Activated CD4-positive, alpha-beta memory T cell treated with anti-CD3 and anti-CD28 coated beads for 36 hours (primary cell): ENCODE measurements at regions of chr3 and their contacts with region 1.

Region 1: DNA sequence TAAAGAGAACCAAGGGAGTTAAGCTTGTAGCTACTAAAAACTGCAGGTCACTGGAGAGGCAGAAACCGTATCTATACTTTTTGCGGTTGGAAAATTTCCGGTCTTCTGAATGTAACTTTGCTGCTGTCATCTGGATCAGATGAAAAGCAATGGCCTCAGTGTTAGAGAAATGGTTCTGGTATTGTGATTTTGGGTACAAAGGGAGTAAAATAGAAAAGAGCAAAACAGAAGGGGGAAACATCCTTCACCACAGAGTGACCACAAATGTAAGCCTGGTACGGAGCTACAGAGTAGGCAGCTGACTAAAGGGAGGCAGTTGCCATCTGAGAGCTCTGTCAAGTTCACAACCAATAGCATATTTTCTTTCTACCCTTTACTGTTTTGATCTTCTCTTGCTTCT is 5.6 kb downstream of the CD96 start:
- DNase-seq: peak; percentile 71
- H3K4me3 Mint-ChIP-seq: no peak overlapping the region
- H3K27ac Mint-ChIP-seq: no peak overlapping the region
- H3K4me1 Mint-ChIP-seq: peaks cover 43% of the 10 kb centered on the region
- H3K27me3 Mint-ChIP-seq: no peaks in the 10 kb centered on the region

Region 2: DNA sequence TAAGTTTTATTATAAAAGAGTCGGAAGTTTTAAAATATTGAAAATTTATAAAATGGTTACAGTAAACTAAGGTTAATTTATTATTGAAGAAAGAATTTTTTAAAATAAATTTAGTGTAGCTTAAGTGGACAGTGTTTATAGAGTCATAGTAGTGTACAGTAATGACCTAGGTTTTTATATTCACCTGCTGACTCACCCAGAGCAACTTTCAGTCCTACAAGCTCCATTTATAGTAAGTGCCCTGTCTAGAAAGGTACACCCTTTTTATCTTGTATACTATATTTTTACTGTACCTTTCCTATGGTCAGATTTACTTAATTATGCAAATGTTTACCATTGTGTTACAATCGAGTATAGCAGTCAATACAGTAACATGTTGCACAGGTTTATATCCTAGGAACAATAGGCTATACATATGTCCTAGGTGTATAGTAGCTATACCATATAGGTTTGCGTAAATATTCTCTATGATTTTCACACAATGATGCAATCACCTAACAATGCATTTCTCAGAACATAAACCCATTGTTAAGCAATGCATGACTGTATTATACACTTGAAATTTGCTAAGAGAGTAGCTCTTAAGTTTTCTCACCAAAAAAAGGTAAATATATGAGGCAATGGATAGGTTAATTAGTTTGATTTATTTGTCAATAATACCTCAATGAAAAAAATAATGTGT is 112.5 kb before region 1 on chr3:
- CTCF ChIA-PET with region 1: no interaction called
- POLR2A ChIA-PET with region 1: no interaction called
- intact Hi-C with region 1: no loop called
- DNase-seq: no peak
- H3K4me3 Mint-ChIP-seq: no peak overlapping the region
- H3K27ac Mint-ChIP-seq: no peak overlapping the region
- H3K4me1 Mint-ChIP-seq: no peaks in the 10 kb centered on the region
- H3K27me3 Mint-ChIP-seq: no peaks in the 10 kb centered on the region

Region 3: GRCh38 chr3:111531446-111531845 is 16.2 kb before region 1 on chr3:
- CTCF ChIA-PET with region 1: no interaction called
- POLR2A ChIA-PET with region 1: no interaction called
- intact Hi-C with region 1: no loop called
- DNase-seq: no peak
- H3K4me3 Mint-ChIP-seq: no peak overlapping the region
- H3K27ac Mint-ChIP-seq: no peak overlapping the region
- H3K4me1 Mint-ChIP-seq: peaks cover 11% of the 10 kb centered on the region
- H3K27me3 Mint-ChIP-seq: no peaks in the 10 kb centered on the region

Region 4: GRCh38 chr3:111571907-111572460 is 24.4 kb after region 1 on chr3:
- CTCF ChIA-PET with region 1: interaction called, 4 read pairs
- POLR2A ChIA-PET with region 1: interaction called, 5 read pairs
- intact Hi-C with region 1: loop called (anchors 1 kb)
- DNase-seq: peak; percentile 70
- H3K4me3 Mint-ChIP-seq: no peak overlapping the region
- H3K27ac Mint-ChIP-seq: peak overlapping the region; percentile 81
- H3K4me1 Mint-ChIP-seq: peaks cover 65% of the 10 kb centered on the region
- H3K27me3 Mint-ChIP-seq: no peaks in the 10 kb centered on the region

Region 5: DNA sequence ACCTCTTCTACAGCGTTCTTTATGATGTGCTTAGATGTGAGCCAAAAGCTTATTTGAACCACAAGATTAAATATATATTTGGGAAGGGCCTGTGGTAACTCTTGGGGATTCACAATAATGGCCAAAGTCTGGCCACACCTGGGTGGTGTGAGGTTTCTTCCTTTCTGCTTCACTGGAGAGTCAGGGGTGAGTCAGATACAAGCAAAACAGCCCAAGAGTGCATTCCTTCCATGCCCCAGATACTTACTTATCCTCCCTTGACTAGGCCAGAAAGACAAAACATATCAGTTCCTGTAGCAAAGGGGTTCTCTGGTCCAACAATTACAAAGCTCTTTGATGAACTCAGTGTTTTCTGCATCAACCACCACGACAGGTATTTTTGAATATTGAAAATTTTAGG is 46.6 kb after region 1 on chr3:
- CTCF ChIA-PET with region 1: interaction called, 11 read pairs
- POLR2A ChIA-PET with region 1: interaction called, 87 read pairs
- intact Hi-C with region 1: loop called (anchors 1 kb)
- DNase-seq: no peak
- H3K4me3 Mint-ChIP-seq: peak overlapping the region; percentile 86
- H3K27ac Mint-ChIP-seq: peak overlapping the region; percentile 97
- H3K4me1 Mint-ChIP-seq: peaks cover 57% of the 10 kb centered on the region
- H3K27me3 Mint-ChIP-seq: peaks cover 2% of the 10 kb centered on the region

Region 6: GRCh38 chr3:111604119-111604518 is 56.5 kb after region 1 on chr3:
- CTCF ChIA-PET with region 1: interaction called, 6 read pairs
- POLR2A ChIA-PET with region 1: interaction called, 13 read pairs
- intact Hi-C with region 1: loop called (anchors 1 kb)
- DNase-seq: peak; percentile 71
- H3K4me3 Mint-ChIP-seq: peak overlapping the region; percentile 62
- H3K27ac Mint-ChIP-seq: peak overlapping the region; percentile 92
- H3K4me1 Mint-ChIP-seq: peaks cover 87% of the 10 kb centered on the region
- H3K27me3 Mint-ChIP-seq: no peaks in the 10 kb centered on the region

Region 7: GRCh38 chr3:111610189-111610588 is 62.6 kb after region 1 on chr3:
- CTCF ChIA-PET with region 1: interaction called, 48 read pairs
- POLR2A ChIA-PET with region 1: interaction called, 21 read pairs
- intact Hi-C with region 1: loop called (anchors 1 kb)
- DNase-seq: no peak
- H3K4me3 Mint-ChIP-seq: peak overlapping the region; percentile 50
- H3K27ac Mint-ChIP-seq: peak overlapping the region; percentile 92
- H3K4me1 Mint-ChIP-seq: peaks cover 96% of the 10 kb centered on the region
- H3K27me3 Mint-ChIP-seq: no peaks in the 10 kb centered on the region